ENCODE measurements at regions of chr1 and their contacts with region 1.

Region 1: GRCh38 chr1:245541369-245541768 is 386.6 kb downstream of the KIF26B start:
- DNase-seq: no peak
- ATAC-seq: no peak
- H3K4me3 ChIP-seq: no peak overlapping the region
- H3K27ac ChIP-seq: no peak overlapping the region
- H3K4me1 ChIP-seq: no peaks in the 10 kb centered on the region
- H3K27me3 ChIP-seq: peaks cover 0 to 5% (median 0%) of the 10 kb centered on the region in 3 donors
- CTCF ChIP-seq: no peak

Region 2: DNA sequence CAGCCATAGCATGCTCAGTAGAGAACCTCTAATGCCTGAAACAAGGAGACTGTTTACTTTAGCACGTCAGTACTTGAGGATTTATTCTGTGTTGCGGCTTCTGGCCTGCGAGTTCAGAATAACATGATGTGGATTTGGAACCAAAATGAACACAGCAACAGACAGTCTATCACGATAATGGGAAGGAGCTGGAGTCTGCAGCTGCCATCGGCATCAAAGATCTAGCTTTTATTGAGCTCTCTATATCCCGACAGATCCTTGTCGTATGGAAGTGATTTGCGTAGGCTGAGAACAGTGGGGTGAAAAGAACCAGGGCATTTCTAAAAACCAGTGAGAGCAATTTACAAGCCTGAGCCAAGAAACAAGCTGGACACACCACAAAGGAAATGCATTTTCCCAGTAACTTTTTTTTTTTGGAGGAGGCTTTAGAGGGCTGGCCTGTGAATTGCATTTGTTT is 92.4 kb before region 1 on chr1:
- intact Hi-C with region 1: no loop called
- DNase-seq: no peak
- ATAC-seq: no peak
- H3K4me3 ChIP-seq: no peak overlapping the region
- H3K27ac ChIP-seq: no peak overlapping the region
- H3K4me1 ChIP-seq: no peaks in the 10 kb centered on the region
- H3K27me3 ChIP-seq: no peaks in the 10 kb centered on the region
- CTCF ChIP-seq: no peak

Region 3: DNA sequence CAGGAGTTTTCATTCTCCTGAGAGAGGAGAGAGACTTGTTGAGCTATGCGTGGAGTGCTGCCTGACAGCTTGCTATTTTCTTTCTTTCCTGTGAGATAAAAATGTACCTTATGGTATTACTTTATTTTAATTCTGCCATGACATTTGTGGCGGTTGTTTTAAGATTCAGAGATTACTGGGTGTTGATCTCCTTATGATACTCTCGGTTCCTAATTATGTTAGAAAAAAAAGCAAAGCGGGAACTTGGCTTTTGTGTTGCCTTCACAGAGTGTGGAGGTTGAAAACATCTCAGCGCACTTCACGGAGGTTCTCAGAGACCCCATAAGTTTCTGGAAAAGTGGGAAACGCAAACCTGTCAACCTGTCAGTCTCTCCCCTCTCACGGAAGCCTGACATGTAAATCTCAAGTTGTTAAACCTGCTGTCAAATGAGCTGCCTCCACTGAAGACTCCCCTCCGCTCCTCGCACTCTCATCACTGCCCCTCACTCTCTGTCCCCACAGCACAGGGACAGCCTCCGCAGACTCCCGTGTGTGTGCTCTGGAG is 19.0 kb after region 1 on chr1:
- intact Hi-C with region 1: loop called in 1 of 2 experiments (anchors 2 kb)
- DNase-seq: no peak
- ATAC-seq: no peak
- H3K4me3 ChIP-seq: no peak overlapping the region
- H3K27ac ChIP-seq: no peak overlapping the region
- H3K4me1 ChIP-seq: no peaks in the 10 kb centered on the region
- H3K27me3 ChIP-seq: no peaks in the 10 kb centered on the region
- CTCF ChIP-seq: no peak

Measured in psoas muscle (tissue), 8 donors.